ENCODE measurements at regions of chr6 and their contacts with region 1.

Region 1: DNA sequence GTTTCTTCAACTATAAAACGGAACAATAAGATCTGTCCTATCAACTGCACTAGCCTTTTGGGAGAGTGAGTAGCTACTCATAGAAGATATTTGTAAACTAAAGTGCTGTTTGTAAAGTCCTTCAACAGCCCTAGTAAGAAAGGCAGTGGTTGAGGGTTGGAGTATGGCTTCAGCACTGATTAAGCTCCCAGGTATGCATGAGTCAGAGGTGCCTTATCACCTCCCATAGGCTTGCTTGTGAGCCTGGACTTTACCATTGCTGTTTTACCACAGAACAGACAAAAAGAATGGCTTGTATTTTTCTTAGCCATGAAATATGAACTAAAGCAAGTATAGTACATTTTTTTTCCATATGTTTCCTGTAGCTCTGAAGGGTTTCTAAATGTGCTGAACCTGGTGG is 44.1 kb downstream of the SAMD3 start:
- DNase-seq: no peak
- H3K4me3 ChIP-seq: no peak overlapping the region
- H3K4me3 Mint-ChIP-seq: no peak overlapping the region
- H3K27ac ChIP-seq: no peak overlapping the region
- H3K27ac Mint-ChIP-seq: peak overlapping the region in 1 of 7 donors; percentile 25
- H3K4me1 ChIP-seq: peaks cover 8% of the 10 kb centered on the region
- H3K4me1 Mint-ChIP-seq: peaks cover 13 to 27% (median 19%) of the 10 kb centered on the region in 4 donors
- H3K27me3 ChIP-seq: no peaks in the 10 kb centered on the region
- H3K27me3 Mint-ChIP-seq: no peaks in the 10 kb centered on the region

Region 2: GRCh38 chr6:129966125-129966524 is 212.6 kb before region 1 on chr6:
- CTCF ChIA-PET with region 1: no interaction called
- POLR2A ChIA-PET with region 1: no interaction called
- intact Hi-C with region 1: no loop called
- DNase-seq: no peak
- H3K4me3 ChIP-seq: no peak overlapping the region
- H3K4me3 Mint-ChIP-seq: no peak overlapping the region
- H3K27ac ChIP-seq: no peak overlapping the region
- H3K27ac Mint-ChIP-seq: no peak overlapping the region
- H3K4me1 ChIP-seq: no peaks in the 10 kb centered on the region
- H3K4me1 Mint-ChIP-seq: no peaks in the 10 kb centered on the region
- H3K27me3 ChIP-seq: peaks cover 6% of the 10 kb centered on the region
- H3K27me3 Mint-ChIP-seq: peaks cover 5 to 15% of the 10 kb centered on the region in 2 donors

Region 3: GRCh38 chr6:130202782-130203181 is 24.1 kb after region 1 on chr6:
- CTCF ChIA-PET with region 1: no interaction called
- POLR2A ChIA-PET with region 1: interaction called, 19 read pairs
- intact Hi-C with region 1: no loop called
- DNase-seq: peak in 1 of 5 donors; percentile 64
- H3K4me3 ChIP-seq: peak overlapping the region in 1 of 2 donors; percentile 5
- H3K4me3 Mint-ChIP-seq: peak overlapping the region in 7 of 8 donors; percentile 7 to 81 (median 47)
- H3K27ac ChIP-seq: no peak overlapping the region
- H3K27ac Mint-ChIP-seq: peak overlapping the region in 6 of 7 donors; percentile 10 to 82 (median 76)
- H3K4me1 ChIP-seq: peaks cover 44% of the 10 kb centered on the region
- H3K4me1 Mint-ChIP-seq: peaks cover 46 to 87% (median 70%) of the 10 kb centered on the region in 4 donors
- H3K27me3 ChIP-seq: no peaks in the 10 kb centered on the region
- H3K27me3 Mint-ChIP-seq: no peaks in the 10 kb centered on the region

Region 4: DNA sequence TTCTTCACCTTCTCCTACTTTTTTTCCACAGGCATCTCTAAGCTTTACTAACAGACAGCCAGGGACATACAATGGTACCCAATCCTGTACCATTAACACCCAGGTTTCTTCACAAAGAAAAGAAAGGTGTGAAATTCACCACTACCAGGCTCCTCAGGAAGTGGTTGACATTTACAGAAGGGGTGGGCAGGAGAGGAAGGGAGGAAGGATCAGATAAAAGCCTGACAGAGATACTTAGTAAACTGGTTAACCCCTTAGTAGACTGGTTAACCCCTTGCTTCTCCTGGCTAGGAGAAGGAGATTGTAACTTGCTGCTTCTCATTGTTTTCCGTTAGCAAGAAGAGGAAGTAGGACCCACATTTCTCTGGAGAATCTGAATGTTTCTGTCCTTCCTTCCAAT is 36.8 kb after region 1 on chr6:
- CTCF ChIA-PET with region 1: interaction called, 3 read pairs
- POLR2A ChIA-PET with region 1: interaction called, 64 read pairs
- intact Hi-C with region 1: no loop called
- DNase-seq: peak; percentile 71 to 82 (median 78)
- H3K4me3 ChIP-seq: peak overlapping the region; percentile 7 to 39
- H3K4me3 Mint-ChIP-seq: peak overlapping the region; percentile 79 to 95 (median 86)
- H3K27ac ChIP-seq: peak overlapping the region; percentile 23
- H3K27ac Mint-ChIP-seq: peak overlapping the region; percentile 25 to 89 (median 69)
- H3K4me1 ChIP-seq: peaks cover 77% of the 10 kb centered on the region
- H3K4me1 Mint-ChIP-seq: peaks cover 38 to 78% (median 61%) of the 10 kb centered on the region in 4 donors
- H3K27me3 ChIP-seq: no peaks in the 10 kb centered on the region
- H3K27me3 Mint-ChIP-seq: no peaks in the 10 kb centered on the region

Region 5: DNA sequence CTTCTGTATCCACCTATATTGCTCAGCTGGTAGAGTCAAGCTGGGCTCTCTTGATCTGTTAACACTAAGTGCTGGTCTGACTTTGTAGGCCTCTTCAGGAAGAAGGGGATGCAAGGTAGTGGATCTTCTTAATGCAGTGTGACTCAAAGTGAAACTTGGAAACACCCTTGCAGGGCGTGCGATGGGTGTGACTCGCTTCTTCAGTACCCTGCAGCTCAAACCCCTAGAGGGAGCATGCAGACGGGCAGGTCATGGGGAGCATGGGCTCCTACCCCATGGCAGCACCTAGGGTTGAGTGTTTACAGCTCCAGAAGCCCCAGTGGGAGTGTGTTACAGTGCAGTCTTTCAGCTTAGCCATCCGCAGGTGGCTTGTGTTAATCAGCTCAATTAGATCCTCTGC is 44.8 kb after region 1 on chr6:
- CTCF ChIA-PET with region 1: interaction called, 22 read pairs
- POLR2A ChIA-PET with region 1: interaction called, 10 read pairs
- intact Hi-C with region 1: no loop called
- DNase-seq: peak; percentile 60 to 78 (median 63)
- H3K4me3 ChIP-seq: no peak overlapping the region
- H3K4me3 Mint-ChIP-seq: peak overlapping the region; percentile 62 to 93 (median 89)
- H3K27ac ChIP-seq: peak overlapping the region; percentile 47
- H3K27ac Mint-ChIP-seq: peak overlapping the region; percentile 83 to 96 (median 92)
- H3K4me1 ChIP-seq: peaks cover 39% of the 10 kb centered on the region
- H3K4me1 Mint-ChIP-seq: peaks cover 27 to 52% (median 40%) of the 10 kb centered on the region in 4 donors
- H3K27me3 ChIP-seq: no peaks in the 10 kb centered on the region
- H3K27me3 Mint-ChIP-seq: no peaks in the 10 kb centered on the region

Region 6: DNA sequence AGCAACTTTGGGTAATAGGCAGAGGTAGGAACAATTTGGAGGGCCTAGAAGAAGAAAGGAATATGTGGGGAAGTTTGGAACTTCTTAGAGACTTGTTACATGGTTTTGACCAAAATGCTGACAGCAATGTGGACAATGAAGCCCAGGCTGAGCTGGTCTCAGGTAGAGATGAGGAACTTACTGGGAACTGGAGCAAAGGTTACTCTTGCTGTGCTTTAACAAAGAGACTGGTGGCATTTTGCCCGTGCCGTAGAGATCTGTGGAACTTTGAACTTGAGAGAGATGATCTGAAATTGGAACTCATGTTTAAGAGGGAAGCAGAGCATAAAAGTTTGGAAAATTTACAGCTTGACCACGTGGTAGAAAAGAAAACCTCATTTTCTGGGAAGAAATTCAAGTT is 158.8 kb after region 1 on chr6:
- CTCF ChIA-PET with region 1: no interaction called
- POLR2A ChIA-PET with region 1: no interaction called
- intact Hi-C with region 1: no loop called
- DNase-seq: no peak
- H3K4me3 ChIP-seq: no peak overlapping the region
- H3K4me3 Mint-ChIP-seq: no peak overlapping the region
- H3K27ac ChIP-seq: no peak overlapping the region
- H3K27ac Mint-ChIP-seq: no peak overlapping the region
- H3K4me1 ChIP-seq: no peaks in the 10 kb centered on the region
- H3K4me1 Mint-ChIP-seq: no peaks in the 10 kb centered on the region
- H3K27me3 ChIP-seq: no peaks in the 10 kb centered on the region
- H3K27me3 Mint-ChIP-seq: no peaks in the 10 kb centered on the region

Measured in CD4-positive, alpha-beta memory T cell (primary cell).